CD8-positive, alpha-beta T cell (primary cell): ENCODE measurements at regions of chr11 and their contacts with region 1.

Region 1: DNA sequence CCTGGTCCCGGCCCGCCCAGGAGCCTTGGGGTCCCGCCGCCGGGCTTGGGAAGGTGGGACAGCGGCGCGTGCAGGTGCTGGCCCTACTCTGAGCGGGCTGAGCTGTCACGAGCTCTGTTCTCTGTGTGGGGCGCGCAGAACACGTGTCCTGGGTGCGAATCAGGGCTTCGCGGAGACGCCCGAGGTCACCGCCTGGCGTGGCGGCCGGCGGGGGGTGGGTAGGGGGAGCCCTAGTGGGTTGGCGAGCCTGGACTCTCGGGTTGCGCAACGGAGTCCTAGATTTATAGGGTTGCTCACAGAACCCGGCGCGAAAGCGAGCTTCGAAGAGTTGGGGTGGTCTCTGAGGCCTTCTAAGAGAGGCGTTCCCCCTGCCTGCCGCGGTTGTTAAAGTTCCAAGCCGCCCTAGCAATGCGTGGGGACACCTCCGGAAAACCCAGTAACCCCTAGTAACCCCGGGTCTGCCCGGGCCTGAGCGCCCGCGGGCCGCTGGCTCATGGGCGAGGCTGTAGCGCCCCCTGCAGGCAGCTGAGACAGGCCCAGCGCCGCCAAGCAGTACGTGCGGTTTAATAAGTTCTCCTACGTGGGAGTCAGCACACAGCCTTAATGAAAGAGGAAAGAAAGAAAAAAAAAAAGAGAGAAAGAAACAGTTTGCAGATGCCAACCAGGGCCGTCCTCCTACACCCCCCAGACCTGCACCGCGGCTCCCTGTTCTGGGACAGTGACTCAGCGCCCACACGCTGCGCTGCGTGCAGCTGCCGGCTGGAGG is 2.8 kb downstream of the ADM start:
- DNase-seq: peak; percentile 67 to 92 (median 81)
- ATAC-seq: peak; percentile 62
- H3K4me3 ChIP-seq: peak overlapping the region; percentile 83 to 91
- H3K4me3 Mint-ChIP-seq: peak overlapping the region; percentile 95
- H3K27ac ChIP-seq: no peak overlapping the region
- H3K27ac Mint-ChIP-seq: no peak overlapping the region
- H3K4me1 ChIP-seq: peaks cover 43% of the 10 kb centered on the region
- H3K4me1 Mint-ChIP-seq: peaks cover 38% of the 10 kb centered on the region
- H3K27me3 ChIP-seq: peaks cover 16 to 30% of the 10 kb centered on the region in 2 experiments
- H3K27me3 Mint-ChIP-seq: peaks cover 40% of the 10 kb centered on the region
- CTCF ChIP-seq: peak; percentile 98

Region 2: DNA sequence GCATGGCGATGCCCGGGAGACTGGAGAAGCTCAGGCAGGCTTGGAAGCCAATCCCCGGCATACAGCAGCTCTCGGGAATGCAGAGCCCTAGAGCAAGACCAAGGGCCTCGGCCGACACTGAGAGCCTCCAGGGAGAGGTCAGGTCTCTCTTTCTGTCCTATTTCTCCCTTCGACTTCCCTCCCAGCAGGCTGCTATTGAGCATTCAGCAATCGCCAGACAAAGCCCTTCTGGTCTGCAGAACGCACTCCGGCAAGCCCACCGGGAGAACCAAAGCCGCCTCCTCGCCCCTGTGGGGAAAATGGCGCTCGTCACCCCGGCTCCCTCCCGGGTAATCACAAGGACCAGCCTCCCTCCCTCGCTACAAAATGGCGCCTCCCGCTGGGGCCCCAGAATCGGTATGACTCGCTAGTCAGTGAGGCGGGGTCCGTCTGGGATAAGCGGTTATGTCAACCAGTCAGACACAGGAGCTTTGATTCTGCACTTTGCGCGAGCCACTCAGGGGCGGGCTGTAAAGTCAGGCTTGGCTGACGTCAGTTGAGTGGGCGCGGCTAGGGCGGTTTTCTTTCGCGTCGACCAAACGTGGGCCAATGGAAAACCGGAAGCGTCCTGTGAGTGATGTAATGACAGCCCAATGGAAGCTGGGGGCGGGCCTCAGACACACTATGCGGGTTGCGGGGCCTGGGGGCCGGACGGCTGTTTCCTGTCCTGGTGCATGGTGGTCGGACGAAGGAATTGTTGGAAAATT is 847.1 kb before region 1 on chr11 and contains the start of gene ZNF143:
- CTCF ChIA-PET with region 1: no interaction called
- POLR2A ChIA-PET with region 1: interaction called, 3 read pairs
- intact Hi-C with region 1: loop called in 1 of 2 experiments (anchors 5 kb)
- DNase-seq: peak; percentile 99 to 100 (median 100)
- ATAC-seq: peak; percentile 89
- H3K4me3 ChIP-seq: peak within 1 kb of the TSS; percentile 89 to 93
- H3K4me3 Mint-ChIP-seq: peak within 1 kb of the TSS; percentile 92
- H3K27ac ChIP-seq: peak within 1 kb of the TSS; percentile 98
- H3K27ac Mint-ChIP-seq: peak within 1 kb of the TSS; percentile 97
- H3K4me1 ChIP-seq: peaks cover 31% of the 10 kb centered on the region
- H3K4me1 Mint-ChIP-seq: peaks cover 33% of the 10 kb centered on the region
- H3K27me3 ChIP-seq: no peaks in the 10 kb centered on the region
- H3K27me3 Mint-ChIP-seq: no peaks in the 10 kb centered on the region
- CTCF ChIP-seq: no peak
- total RNA-seq, gene ZNF143: 13.4 to 15.4 TPM

Region 3: DNA sequence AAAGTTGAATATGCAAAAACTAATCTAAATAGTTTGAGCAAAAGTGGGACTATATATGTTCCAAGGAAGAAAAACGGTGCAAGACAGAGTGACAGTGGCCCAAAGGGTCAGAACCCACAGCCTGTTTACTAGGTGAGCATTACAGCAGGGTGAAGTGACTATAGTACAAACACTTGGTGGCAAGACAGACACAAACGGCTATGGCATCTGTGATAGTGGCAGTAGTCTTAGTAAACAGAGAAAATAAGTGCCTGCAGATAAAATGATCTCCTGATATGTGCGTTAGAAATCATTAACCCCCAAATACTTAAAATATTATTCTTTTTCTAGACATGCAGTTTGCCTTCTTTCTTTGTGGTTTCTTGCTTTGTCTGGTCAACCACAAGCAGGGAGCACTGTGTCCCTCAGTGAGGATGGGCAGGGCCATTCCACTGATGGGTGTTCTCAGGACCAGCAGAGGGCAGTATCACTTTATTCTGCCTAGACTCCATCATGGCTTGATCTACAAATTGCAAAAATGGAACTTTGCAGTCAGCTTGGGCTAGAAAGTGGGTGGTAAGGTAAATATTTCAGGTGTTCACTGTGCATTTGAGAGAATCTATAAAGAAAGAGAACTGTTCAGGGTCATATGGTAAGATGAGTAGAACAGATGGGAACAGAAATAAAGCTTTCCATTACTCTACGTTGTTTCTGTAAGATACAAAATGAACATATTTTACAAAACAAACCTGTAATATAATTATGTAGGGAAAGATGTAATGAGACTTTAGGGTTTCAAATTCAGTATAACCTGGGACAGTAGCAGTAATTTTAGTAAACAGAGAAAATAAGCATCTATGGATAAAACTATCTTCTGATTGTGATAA is 445.5 kb before region 1 on chr11:
- CTCF ChIA-PET with region 1: interaction called, 7 read pairs
- POLR2A ChIA-PET with region 1: no interaction called
- intact Hi-C with region 1: loop called (anchors 1 to 2 kb)
- DNase-seq: peak in 6 of 9 experiments; percentile 16 to 65 (median 42)
- ATAC-seq: peak; percentile 77
- H3K4me3 ChIP-seq: no peak overlapping the region
- H3K4me3 Mint-ChIP-seq: no peak overlapping the region
- H3K27ac ChIP-seq: no peak overlapping the region
- H3K27ac Mint-ChIP-seq: no peak overlapping the region
- H3K4me1 ChIP-seq: peaks cover 15% of the 10 kb centered on the region
- H3K4me1 Mint-ChIP-seq: peaks cover 22% of the 10 kb centered on the region
- H3K27me3 ChIP-seq: no peaks in the 10 kb centered on the region
- H3K27me3 Mint-ChIP-seq: no peaks in the 10 kb centered on the region
- CTCF ChIP-seq: peak; percentile 62

Region 4: DNA sequence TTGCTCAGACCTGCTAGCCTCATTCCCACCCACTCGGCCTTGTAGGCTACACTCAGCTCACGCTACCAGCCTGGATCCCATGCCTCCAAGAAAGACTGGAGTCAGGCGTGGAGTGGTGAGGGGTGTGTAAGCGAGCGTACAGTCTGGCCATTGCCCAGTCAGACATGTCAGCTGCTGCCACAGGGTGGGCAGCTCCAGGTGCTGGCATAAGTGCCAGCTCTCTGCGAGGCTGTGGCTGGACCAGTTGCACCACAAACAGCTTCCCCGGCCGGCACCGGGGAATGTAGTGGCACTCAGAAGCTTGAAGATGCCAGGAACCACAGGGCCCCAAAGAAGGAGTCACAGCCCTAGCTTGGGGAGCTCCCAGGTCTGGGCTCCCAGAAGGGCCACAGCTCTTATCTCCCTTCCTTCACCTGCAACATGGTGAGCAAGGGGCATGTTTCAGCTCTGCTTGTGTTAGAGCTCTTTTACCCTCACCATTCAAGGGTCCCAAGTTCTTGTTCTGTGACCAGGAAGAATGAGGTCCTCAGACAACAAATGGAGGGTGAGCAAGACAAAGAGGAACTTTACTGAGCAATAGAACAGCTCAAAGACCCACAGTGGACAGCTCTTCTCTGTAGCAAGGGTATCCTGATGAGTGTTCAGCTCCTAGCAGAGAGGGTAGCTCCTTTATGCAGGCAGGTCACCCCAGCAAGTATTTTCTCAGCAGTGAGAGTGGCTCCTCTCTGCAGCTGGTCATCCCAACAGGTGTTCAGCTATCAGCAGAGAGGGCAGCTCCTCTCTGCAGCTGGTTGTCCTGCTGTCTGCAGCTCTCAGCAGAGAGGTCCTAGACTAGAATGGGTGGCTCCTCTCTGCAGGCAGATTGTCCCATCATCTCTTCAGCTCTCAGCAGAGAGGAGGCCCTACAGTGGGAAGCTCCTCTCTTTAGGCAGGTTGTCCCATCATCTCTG is 19.6 kb before region 1 on chr11:
- CTCF ChIA-PET with region 1: interaction called, 11 read pairs
- POLR2A ChIA-PET with region 1: interaction called, 4 read pairs
- intact Hi-C with region 1: loop called in 1 of 2 experiments (anchors 2 kb)
- DNase-seq: no peak
- ATAC-seq: no peak
- H3K4me3 ChIP-seq: no peak overlapping the region
- H3K4me3 Mint-ChIP-seq: no peak overlapping the region
- H3K27ac ChIP-seq: no peak overlapping the region
- H3K27ac Mint-ChIP-seq: no peak overlapping the region
- H3K4me1 ChIP-seq: peaks cover 5% of the 10 kb centered on the region
- H3K4me1 Mint-ChIP-seq: peaks cover 12% of the 10 kb centered on the region
- H3K27me3 ChIP-seq: no peaks in the 10 kb centered on the region
- H3K27me3 Mint-ChIP-seq: no peaks in the 10 kb centered on the region
- CTCF ChIP-seq: no peak

Region 5: DNA sequence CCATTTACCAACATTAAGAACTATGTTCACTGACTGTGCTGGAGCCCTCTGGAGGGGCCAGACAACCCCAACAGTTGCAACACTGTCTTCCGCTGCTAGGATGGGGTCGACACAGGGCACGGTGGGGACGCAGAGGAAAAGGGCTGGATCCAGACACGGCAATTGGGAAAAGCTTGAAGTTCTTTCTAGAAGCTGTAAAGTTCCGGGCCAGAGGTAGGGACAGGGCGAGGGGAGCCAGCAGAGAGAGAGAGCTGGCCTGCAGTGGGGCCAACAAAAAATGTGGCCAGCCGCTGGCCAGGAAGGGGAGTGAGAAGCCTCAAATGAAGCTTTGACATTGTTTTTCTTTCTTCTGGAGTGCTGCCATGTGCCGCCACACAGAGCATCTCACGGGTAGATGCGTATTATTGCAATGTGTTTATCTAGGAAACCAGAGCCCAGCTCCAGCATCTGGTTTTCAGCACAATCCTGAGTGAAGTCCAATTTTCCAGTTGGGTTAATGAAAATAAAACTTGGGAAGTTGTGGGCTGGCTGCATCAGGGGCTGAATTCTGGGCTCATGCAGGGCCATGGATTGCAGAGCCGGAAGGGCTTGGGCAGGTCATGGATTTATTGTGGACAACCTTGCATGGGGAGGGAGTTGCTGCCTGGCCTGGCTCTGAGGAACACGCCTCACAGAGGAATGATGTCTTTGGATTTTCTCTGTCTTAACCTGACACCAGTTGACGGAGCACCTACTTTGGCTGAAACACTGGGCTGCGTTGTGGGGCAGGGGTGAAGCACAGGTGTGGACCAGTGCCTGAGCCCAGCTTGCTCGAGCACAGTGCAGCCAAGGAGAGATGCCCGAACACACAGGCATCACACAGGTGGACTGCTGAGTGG is 79.8 kb after region 1 on chr11:
- CTCF ChIA-PET with region 1: no interaction called
- POLR2A ChIA-PET with region 1: no interaction called
- intact Hi-C with region 1: no loop called
- DNase-seq: peak in 1 of 9 experiments; percentile 34
- ATAC-seq: no peak
- H3K4me3 ChIP-seq: no peak overlapping the region
- H3K4me3 Mint-ChIP-seq: no peak overlapping the region
- H3K27ac ChIP-seq: no peak overlapping the region
- H3K27ac Mint-ChIP-seq: no peak overlapping the region
- H3K4me1 ChIP-seq: no peaks in the 10 kb centered on the region
- H3K4me1 Mint-ChIP-seq: no peaks in the 10 kb centered on the region
- H3K27me3 ChIP-seq: peaks cover 2 to 5% of the 10 kb centered on the region in 2 experiments
- H3K27me3 Mint-ChIP-seq: peaks cover 33% of the 10 kb centered on the region
- CTCF ChIP-seq: no peak

Region 6: GRCh38 chr11:10455637-10456487 is 148.2 kb after region 1 on chr11:
- CTCF ChIA-PET with region 1: no interaction called
- POLR2A ChIA-PET with region 1: no interaction called
- intact Hi-C with region 1: loop called (anchors 5 kb)
- DNase-seq: peak; percentile 30 to 87 (median 74)
- ATAC-seq: peak; percentile 74
- H3K4me3 ChIP-seq: peak overlapping the region; percentile 52 to 54
- H3K4me3 Mint-ChIP-seq: peak overlapping the region; percentile 91
- H3K27ac ChIP-seq: peak overlapping the region; percentile 10 to 67
- H3K27ac Mint-ChIP-seq: peak overlapping the region; percentile 98
- H3K4me1 ChIP-seq: peaks cover 58% of the 10 kb centered on the region
- H3K4me1 Mint-ChIP-seq: peaks cover 81% of the 10 kb centered on the region
- H3K27me3 ChIP-seq: no peaks in the 10 kb centered on the region
- H3K27me3 Mint-ChIP-seq: no peaks in the 10 kb centered on the region
- CTCF ChIP-seq: no peak